ENCODE measurements at regions of chr18 and their contacts with region 1.

Region 1: DNA sequence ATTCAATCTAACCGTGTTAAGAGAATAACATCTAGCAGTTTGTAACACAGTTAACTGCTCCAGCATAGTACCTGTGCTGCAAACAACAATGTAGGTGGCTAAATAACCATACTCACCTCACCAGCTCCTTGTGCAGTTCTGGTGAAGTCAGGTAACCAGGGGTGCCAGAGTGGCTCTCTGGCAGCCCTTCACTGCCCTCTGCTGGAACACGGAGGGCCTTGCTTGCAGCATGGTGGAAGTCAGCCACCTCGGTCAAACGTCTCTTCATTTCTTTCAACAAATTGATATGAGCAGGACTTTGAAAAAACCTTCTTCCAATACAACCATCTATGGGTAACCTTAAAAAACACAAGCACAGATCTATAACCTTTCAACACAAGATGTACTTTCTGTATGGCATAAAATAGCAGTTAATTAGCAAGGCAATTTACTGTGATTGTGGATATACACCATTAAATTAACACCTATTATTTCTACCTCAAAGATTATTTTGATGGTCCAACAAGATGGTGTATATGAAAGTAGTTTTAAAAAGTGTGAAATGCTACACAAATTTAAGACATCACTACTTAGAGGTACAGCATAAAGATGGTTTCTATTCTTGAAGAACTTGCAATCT is 56.6 kb downstream of the EPG5 start:
- DNase-seq: peak; percentile 22 to 72 (median 54)
- ATAC-seq: peak; percentile 58 to 82 (median 77)
- H3K4me3 ChIP-seq: no peak overlapping the region
- H3K4me3 Mint-ChIP-seq: no peak overlapping the region
- H3K27ac ChIP-seq: no peak overlapping the region
- H3K27ac Mint-ChIP-seq: no peak overlapping the region
- H3K4me1 ChIP-seq: no peaks in the 10 kb centered on the region
- H3K4me1 Mint-ChIP-seq: peaks cover 0 to 2% (median 0%) of the 10 kb centered on the region in 3 donors
- H3K27me3 ChIP-seq: no peaks in the 10 kb centered on the region
- H3K27me3 Mint-ChIP-seq: no peaks in the 10 kb centered on the region

Region 2: GRCh38 chr18:45974088-45974536 is 63.6 kb after region 1 on chr18:
- CTCF ChIA-PET with region 1: interaction called in 1 of 2 experiments, 11 read pairs
- POLR2A ChIA-PET with region 1: no interaction called
- DNase-seq: peak; percentile 12 to 81 (median 57)
- ATAC-seq: peak; percentile 75 to 80 (median 78)
- H3K4me3 ChIP-seq: no peak overlapping the region
- H3K4me3 Mint-ChIP-seq: no peak overlapping the region
- H3K27ac ChIP-seq: no peak overlapping the region
- H3K27ac Mint-ChIP-seq: peak overlapping the region; percentile 16 to 84
- H3K4me1 ChIP-seq: peaks cover 3 to 4% of the 10 kb centered on the region in 2 experiments
- H3K4me1 Mint-ChIP-seq: peaks cover 0 to 9% (median 6%) of the 10 kb centered on the region in 3 donors
- H3K27me3 ChIP-seq: no peaks in the 10 kb centered on the region
- H3K27me3 Mint-ChIP-seq: no peaks in the 10 kb centered on the region